ENCODE measurements at regions of chr4 and their contacts with region 1.

Region 1: GRCh38 chr4:75056277-75056676 is 123.4 kb downstream of the PARM1 start:
- DNase-seq: no peak
- H3K4me3 ChIP-seq: no peak overlapping the region
- H3K27ac ChIP-seq: no peak overlapping the region
- H3K27me3 ChIP-seq: no peaks in the 10 kb centered on the region
- CTCF ChIP-seq: no peak

Region 2: DNA sequence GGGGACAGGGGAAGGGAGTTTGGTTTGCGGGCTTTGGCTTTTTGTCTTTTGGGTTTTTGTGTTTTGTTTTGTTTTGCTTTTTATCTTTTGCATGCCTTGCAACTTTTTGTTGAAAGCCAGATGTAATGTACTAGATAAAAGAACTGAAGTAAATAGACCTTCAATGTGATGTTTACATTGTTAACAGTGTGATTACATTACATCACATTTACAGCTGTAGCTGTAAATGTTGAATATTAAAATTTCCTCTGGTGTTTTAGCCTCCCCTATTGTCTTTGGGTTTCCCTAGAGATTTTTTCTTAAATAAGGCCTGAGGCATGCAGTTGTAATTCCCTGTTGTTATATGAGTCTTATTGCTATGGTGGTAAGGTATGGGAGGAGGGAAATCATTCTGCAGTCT is 151.6 kb after region 1 on chr4:
- intact Hi-C with region 1: no loop called
- DNase-seq: no peak
- H3K4me3 ChIP-seq: no peak overlapping the region
- H3K27ac ChIP-seq: no peak overlapping the region
- H3K27me3 ChIP-seq: peaks cover 0 to 4% (median 0%) of the 10 kb centered on the region in 45 donors
- CTCF ChIP-seq: no peak

Region 3: GRCh38 chr4:75555294-75556164 is 499.3 kb after region 1 on chr4 and contains the start of gene ODAPH:
- intact Hi-C with region 1: loop called in 1 of 2 experiments (anchors 10 kb)
- DNase-seq: no peak
- H3K4me3 ChIP-seq: no peak within 1 kb of the TSS
- H3K27ac ChIP-seq: no peak within 1 kb of the TSS
- H3K27me3 ChIP-seq: peaks cover 0 to 5% (median 0%) of the 10 kb centered on the region in 45 donors
- CTCF ChIP-seq: no peak
- total RNA-seq, gene ODAPH: 0.28 to 3.6 (median 0.96) TPM in 59 of 120 experiments, not detected in the others

Measured in dorsolateral prefrontal cortex (tissue), 120 donors.